Prostate gland (tissue), 2 donors: ENCODE measurements at regions of chr10 and their contacts with region 1.

Region 1: GRCh38 chr10:80509403-80510161 is 28.1 kb upstream of the SH2D4B start:
- DNase-seq: no peak
- H3K4me3 ChIP-seq: no peak overlapping the region
- H3K27ac ChIP-seq: peak overlapping the region in 1 of 2 donors; percentile 19
- H3K4me1 ChIP-seq: peaks cover 11% of the 10 kb centered on the region
- H3K27me3 ChIP-seq: no peaks in the 10 kb centered on the region
- CTCF ChIP-seq: no peak
- POLR2A ChIP-seq: no peak

Region 2: GRCh38 chr10:80444646-80445319 is 64.8 kb before region 1 on chr10:
- intact Hi-C with region 1: loop called (anchors 1 kb)
- DNase-seq: peak; percentile 56
- H3K4me3 ChIP-seq: no peak overlapping the region
- H3K27ac ChIP-seq: no peak overlapping the region
- H3K4me1 ChIP-seq: peaks cover 3% of the 10 kb centered on the region
- H3K27me3 ChIP-seq: no peaks in the 10 kb centered on the region
- CTCF ChIP-seq: peak; percentile 58 to 94 (median 88)
- POLR2A ChIP-seq: no peak